Sciatic nerve (tissue), 2 donors: ENCODE measurements at regions of chr6 and their contacts with region 1.

Region 1: DNA sequence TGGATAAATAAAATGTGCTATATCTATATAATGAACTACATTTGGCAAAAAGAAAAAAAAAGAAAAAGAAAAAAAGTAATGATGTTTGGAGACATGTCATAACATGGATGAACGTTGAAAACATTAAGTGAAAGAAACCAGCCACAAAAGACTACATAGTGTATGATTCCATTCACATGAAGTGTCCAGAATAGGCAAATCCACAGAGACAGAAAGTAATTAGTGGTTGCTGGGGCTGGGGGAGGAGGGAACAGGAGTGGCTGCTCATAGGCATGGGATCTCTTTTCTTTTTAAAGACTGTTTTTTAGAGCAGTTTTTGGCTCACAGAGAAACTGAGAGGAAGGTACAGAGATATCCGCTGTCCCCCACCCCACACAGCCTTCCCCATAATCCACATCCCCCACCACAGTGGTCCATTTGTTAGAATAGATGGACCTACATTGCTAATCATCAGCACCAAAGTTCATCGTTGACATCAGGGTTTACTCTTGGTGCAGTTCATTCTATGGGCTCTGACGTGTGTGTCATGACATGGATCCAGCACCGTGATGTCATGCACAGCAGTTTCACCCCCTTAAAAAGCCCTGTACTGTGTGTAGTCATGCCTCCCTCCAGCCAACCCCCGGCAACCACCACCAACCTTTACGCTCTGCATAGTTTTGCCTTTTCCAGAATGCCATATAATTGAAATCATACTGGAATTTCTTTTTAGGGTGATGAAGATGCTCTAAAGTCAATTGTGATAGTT is 240.9 kb upstream of the RREB1 start:
- DNase-seq: no peak
- ATAC-seq: no peak

Region 2: GRCh38 chr6:6825193-6825784 is 41.5 kb before region 1 on chr6:
- intact Hi-C with region 1: loop called (anchors 1 kb)
- DNase-seq: no peak
- ATAC-seq: no peak